ENCODE measurements at regions of chr10 and their contacts with region 1.

Region 1: DNA sequence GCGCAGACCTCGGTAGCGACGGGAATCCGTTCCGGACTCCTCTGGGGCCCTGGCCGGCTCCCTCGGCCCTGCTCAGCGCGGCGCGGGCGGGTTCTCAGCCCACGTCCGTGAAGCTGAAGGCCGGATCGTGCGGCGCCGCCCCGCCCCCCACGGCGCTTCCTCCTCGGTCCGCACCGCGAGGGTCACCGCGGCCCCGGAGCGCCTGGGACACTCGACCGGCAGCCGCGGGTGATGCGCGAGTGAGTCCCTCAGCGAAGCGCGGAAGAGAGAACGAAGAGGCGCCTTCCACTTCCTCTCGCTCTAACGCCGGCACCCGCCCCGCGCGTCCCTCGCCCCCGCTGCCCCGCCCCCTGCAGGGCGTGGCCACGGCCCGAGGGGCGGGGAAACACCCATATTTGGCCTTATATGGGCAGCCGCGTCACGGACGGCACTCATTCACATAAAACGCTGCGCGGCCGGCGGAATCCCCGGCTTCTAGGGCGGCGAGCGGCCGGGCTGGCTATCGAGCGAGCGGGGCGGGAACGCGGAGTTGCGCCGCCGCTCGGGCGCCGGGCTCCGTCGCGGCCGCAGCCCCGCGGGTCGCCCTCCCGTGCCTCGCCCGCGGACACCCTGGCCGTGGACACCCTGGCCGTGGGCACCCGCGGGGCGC is at the start of gene DUSP5:
- DNase-seq: peak; percentile 92
- ATAC-seq: peak; percentile 78
- H3K4me3 ChIP-seq: peak within 1 kb of the TSS; percentile 90
- H3K27ac ChIP-seq: peak within 1 kb of the TSS; percentile 86
- H3K4me1 ChIP-seq: peaks cover 20% of the 10 kb centered on the region
- H3K27me3 ChIP-seq: no peaks in the 10 kb centered on the region
- CTCF ChIP-seq: no peak; the same call in 1 of the 2 replicates
- POLR2A ChIP-seq: peak; percentile 99
- RAD21 ChIP-seq: peak; percentile 28
- total RNA-seq, gene DUSP5: 42.1 and 55.3 TPM in 2 replicates

Region 2: DNA sequence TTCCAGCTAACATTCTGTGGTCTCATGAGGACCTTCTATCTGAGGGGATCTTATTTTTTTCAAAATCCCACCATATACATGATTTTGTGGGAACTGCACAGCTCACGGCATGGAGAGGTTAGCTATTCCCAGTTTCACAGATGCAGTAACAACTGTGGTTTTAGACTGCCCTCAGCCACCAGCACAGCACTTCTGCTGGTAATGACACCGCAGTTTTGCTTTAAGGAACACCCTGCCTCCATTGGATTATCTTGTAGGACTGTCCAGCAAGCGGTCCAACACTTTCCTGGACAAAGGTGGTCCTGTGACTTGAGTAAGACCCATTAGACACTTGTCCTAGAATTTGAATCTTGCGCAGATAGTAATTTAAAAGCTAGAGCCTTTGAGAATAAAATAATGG is 127.6 kb before region 1 on chr10:
- CTCF ChIA-PET with region 1: no interaction called
- POLR2A ChIA-PET with region 1: interaction called, 10 read pairs
- dilution Hi-C with region 1: no loop called
- in situ Hi-C with region 1: no loop called
- intact Hi-C with region 1: no loop called
- DNase-seq: no peak
- ATAC-seq: no peak
- H3K4me3 ChIP-seq: no peak overlapping the region
- H3K27ac ChIP-seq: no peak overlapping the region
- H3K4me1 ChIP-seq: 0 out of 2 replicates have a peak, but pooled peaks cover 2% of the 10 kb centered on the region
- H3K27me3 ChIP-seq: no peaks in the 10 kb centered on the region
- CTCF ChIP-seq: no peak
- POLR2A ChIP-seq: no peak
- RAD21 ChIP-seq: no peak

Region 3: GRCh38 chr10:110398419-110399162 is 99.0 kb before region 1 on chr10:
- CTCF ChIA-PET with region 1: no interaction called
- POLR2A ChIA-PET with region 1: no interaction called
- dilution Hi-C with region 1: no loop called
- in situ Hi-C with region 1: no loop called
- intact Hi-C with region 1: loop called (anchors 1 kb)
- DNase-seq: peak; percentile 98
- ATAC-seq: peak; percentile 92
- H3K4me3 ChIP-seq: no peak overlapping the region
- H3K27ac ChIP-seq: peak overlapping the region; percentile 74
- H3K4me1 ChIP-seq: peaks cover 22% of the 10 kb centered on the region
- H3K27me3 ChIP-seq: no peaks in the 10 kb centered on the region
- CTCF ChIP-seq: no peak
- POLR2A ChIP-seq: 0 out of 2 replicates have a peak, but pooled peaks have one; percentile 56
- RAD21 ChIP-seq: peak; percentile 17

Region 4: GRCh38 chr10:110410329-110411046 is 87.1 kb before region 1 on chr10:
- CTCF ChIA-PET with region 1: interaction called, 3 read pairs
- POLR2A ChIA-PET with region 1: interaction called, 3 read pairs
- dilution Hi-C with region 1: no loop called
- in situ Hi-C with region 1: no loop called
- intact Hi-C with region 1: loop called (anchors 2 kb)
- DNase-seq: peak; percentile 98
- ATAC-seq: peak; percentile 79
- H3K4me3 ChIP-seq: no peak overlapping the region
- H3K27ac ChIP-seq: peak overlapping the region; percentile 93
- H3K4me1 ChIP-seq: peaks cover 32% of the 10 kb centered on the region
- H3K27me3 ChIP-seq: no peaks in the 10 kb centered on the region
- CTCF ChIP-seq: no peak
- POLR2A ChIP-seq: peak; percentile 63
- RAD21 ChIP-seq: peak; percentile 34

Region 5: DNA sequence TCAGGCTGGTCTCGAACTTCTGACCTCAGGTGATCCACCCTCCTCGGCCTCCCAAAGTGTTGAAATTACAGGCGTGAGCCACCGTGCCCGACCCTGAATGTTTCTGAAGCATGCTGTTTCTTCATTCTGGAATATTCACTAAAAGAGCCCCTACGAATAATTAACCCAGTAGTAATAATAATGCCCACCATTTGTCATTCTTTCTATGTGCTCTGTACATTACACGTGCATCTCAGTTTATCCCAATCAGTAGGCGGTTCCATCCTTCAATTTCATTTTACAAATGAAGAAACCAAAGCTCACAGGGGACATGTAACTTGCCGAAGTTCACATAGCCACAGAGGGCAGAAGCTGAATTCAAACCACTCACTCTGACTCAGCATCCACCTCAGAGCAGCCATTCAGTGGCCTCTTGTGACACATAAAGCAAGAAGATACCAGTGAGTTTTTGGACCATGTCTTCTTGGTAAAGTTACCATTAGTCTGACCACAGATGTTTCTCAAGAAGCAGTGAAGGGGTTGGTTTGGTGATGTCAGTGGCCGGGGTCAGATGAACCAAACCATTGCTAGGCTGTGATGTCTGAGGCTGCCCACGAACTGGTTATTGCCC is 71.8 kb before region 1 on chr10:
- CTCF ChIA-PET with region 1: no interaction called
- POLR2A ChIA-PET with region 1: interaction called, 3 read pairs
- dilution Hi-C with region 1: no loop called
- in situ Hi-C with region 1: no loop called
- intact Hi-C with region 1: loop called (anchors 1 kb)
- DNase-seq: peak; percentile 99
- ATAC-seq: peak; percentile 71
- H3K4me3 ChIP-seq: no peak overlapping the region
- H3K27ac ChIP-seq: peak overlapping the region; percentile 87
- H3K4me1 ChIP-seq: peaks cover 14% of the 10 kb centered on the region
- H3K27me3 ChIP-seq: no peaks in the 10 kb centered on the region
- CTCF ChIP-seq: no peak
- POLR2A ChIP-seq: peak; percentile 28; the same call in 1 of the 2 replicates
- RAD21 ChIP-seq: no peak

Region 6: DNA sequence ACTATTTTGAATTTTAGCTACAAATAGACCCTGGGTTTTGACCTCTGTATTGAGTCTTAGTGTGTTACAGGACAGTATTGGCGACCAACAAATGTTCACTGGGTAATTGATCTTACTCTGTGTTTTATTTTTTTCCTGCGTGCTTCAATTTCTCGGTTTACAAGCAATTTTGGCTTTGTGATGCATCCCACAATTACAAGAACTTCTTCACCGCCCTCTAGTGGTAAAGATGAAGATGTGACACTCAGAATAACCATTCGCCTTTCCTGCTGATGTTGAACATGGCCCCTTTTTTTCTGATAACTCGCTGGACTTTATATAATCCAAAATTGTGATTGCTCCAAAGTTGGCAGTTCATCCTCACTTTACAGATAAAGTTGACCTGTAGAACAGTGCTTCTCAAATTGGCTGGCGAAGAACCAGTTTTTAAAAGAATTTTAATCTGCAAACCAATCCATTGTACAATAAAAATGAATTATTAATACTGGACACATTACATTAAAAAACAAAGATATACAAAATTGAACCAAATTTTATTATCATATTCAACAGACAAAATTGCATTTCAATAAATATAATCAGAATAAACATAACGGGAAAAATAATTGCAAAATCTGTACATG is 49.7 kb after region 1 on chr10:
- CTCF ChIA-PET with region 1: no interaction called
- POLR2A ChIA-PET with region 1: no interaction called
- dilution Hi-C with region 1: no loop called
- in situ Hi-C with region 1: no loop called
- intact Hi-C with region 1: loop called (anchors 1 kb)
- DNase-seq: peak; percentile 77
- ATAC-seq: peak; percentile 73
- H3K4me3 ChIP-seq: no peak overlapping the region
- H3K27ac ChIP-seq: no peak overlapping the region
- H3K4me1 ChIP-seq: peaks cover 2% of the 10 kb centered on the region; the same call in 1 of the 2 replicates
- H3K27me3 ChIP-seq: peaks cover 2% of the 10 kb centered on the region; the same call in 1 of the 2 replicates
- CTCF ChIP-seq: peak; percentile 82
- POLR2A ChIP-seq: no peak
- RAD21 ChIP-seq: peak; percentile 86